Activated T-helper 1 cell treated with anti-CD3 and anti-CD28 coated beads, Interleukin-12 subunit alpha, Interleukin-12 subunit beta, Interleukin-2, Interleukin-4 antibody, amounts not matched to agents 30 ng/mL and 10 ng/mL and 1 ng/mL, durations not matched to agents 14 hours and 24 hours and 36 hours (primary cell): ENCODE measurements at regions of chr10 and their contacts with region 1.

Region 1: GRCh38 chr10:88828310-88828709 is 23.3 kb downstream of the ANKRD22 start:
- DNase-seq: no peak
- H3K4me3 Mint-ChIP-seq: peak overlapping the region; percentile 12
- H3K27ac Mint-ChIP-seq: no peak overlapping the region
- H3K4me1 Mint-ChIP-seq: peaks cover 84% of the 10 kb centered on the region
- H3K27me3 Mint-ChIP-seq: no peaks in the 10 kb centered on the region

Region 2: GRCh38 chr10:88042160-88043100 is 785.9 kb before region 1 on chr10:
- intact Hi-C with region 1: no loop called
- DNase-seq: no peak
- H3K4me3 Mint-ChIP-seq: no peak overlapping the region
- H3K27ac Mint-ChIP-seq: no peak overlapping the region
- H3K4me1 Mint-ChIP-seq: peaks cover 7% of the 10 kb centered on the region
- H3K27me3 Mint-ChIP-seq: peaks cover 8% of the 10 kb centered on the region

Region 3: GRCh38 chr10:88582806-88583583 is 245.3 kb before region 1 on chr10 and contains the start of gene RNLS:
- intact Hi-C with region 1: no loop called
- DNase-seq: peak; percentile 54
- H3K4me3 Mint-ChIP-seq: peak within 1 kb of the TSS; percentile 85
- H3K27ac Mint-ChIP-seq: peak within 1 kb of the TSS; percentile 73
- H3K4me1 Mint-ChIP-seq: peaks cover 14% of the 10 kb centered on the region
- H3K27me3 Mint-ChIP-seq: peaks cover 8% of the 10 kb centered on the region
- total RNA-seq, gene RNLS: 2.0 and 2.5 TPM in 2 replicates

Region 4: DNA sequence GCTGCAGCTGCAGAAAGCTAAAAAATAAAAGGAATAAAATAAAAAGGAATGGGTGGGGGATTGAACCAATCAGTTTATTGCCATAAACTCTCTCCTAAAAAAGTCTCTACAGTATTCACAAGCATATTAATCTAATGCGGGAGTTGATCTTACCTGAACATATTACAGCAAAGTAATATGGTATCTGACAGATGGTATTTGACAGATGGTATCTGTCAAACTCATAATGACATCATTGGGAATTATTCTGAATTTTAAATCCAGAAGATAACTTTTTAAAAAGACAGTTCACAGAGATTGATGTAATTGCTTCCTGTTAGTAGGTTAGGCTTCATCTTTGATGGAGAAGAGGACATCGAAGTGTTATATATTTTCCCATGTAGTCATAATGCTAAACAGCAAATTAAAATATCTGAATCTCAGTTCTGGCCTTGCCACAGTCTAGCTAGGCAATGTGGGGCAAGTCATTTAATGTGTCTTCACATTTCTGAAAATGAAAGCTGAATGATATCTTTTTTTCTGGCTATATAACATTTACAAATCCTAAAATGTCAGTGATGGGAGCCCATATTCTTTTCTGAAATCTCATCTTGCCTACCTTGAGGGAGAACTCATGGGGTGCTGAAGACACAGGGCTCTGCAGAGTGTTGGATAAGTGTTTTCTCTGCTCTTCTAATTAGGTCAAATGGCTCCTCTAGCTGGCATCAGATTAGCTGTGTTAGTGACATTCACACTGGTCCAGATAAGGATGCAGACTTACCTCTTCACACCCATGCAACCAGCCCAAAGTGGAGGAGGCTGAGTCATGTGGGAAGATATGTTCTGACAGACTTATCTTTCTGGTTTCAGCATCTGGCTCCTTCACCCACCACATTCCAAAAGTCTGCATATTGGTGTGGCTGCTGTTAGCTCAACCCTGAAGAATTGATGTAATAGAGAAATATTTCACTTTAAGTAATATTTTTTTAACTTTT is 27.9 kb before region 1 on chr10:
- intact Hi-C with region 1: no loop called
- DNase-seq: no peak
- H3K4me3 Mint-ChIP-seq: peak overlapping the region; percentile 3
- H3K27ac Mint-ChIP-seq: no peak overlapping the region
- H3K4me1 Mint-ChIP-seq: peaks cover 14% of the 10 kb centered on the region
- H3K27me3 Mint-ChIP-seq: peaks cover 45% of the 10 kb centered on the region

Region 5: DNA sequence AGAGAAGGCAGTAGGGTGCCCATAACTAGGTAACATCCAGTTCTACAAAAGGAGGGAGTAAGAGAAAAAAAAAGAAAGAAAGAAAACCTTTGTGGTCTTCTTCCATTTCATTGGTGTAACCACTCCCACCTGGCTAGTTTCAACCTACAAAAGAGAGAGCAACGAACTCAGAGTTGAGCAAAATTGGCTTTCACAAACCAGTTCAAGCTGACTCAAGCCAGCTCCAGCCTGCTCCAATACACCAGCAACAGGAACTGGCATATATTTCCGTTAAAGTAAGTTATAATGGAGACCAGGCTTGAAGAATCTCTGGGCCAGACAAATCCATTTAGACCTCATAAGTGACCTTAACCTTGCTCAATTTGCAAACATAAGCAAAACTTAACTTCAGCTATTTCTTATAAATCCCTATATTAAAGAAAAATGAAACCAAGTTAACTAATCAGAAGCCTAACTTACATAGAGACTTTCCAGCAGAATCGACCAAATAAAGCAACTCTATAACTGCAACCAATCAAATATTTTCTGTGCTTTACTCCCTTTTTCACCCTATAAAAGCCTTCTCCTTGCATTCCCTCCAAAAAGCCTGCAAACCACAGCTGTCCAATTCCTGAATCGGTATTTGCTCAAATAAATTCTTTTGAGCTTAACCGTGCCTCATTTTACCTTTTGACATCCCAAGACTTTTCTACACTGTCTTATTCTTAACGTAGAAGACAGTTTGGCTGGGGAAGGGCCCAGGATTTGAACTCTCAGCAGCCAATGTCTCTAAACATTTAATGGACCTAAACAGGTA is 13.2 kb after region 1 on chr10:
- intact Hi-C with region 1: no loop called
- DNase-seq: no peak
- H3K4me3 Mint-ChIP-seq: no peak overlapping the region
- H3K27ac Mint-ChIP-seq: no peak overlapping the region
- H3K4me1 Mint-ChIP-seq: peaks cover 10% of the 10 kb centered on the region
- H3K27me3 Mint-ChIP-seq: peaks cover 9% of the 10 kb centered on the region

Region 6: DNA sequence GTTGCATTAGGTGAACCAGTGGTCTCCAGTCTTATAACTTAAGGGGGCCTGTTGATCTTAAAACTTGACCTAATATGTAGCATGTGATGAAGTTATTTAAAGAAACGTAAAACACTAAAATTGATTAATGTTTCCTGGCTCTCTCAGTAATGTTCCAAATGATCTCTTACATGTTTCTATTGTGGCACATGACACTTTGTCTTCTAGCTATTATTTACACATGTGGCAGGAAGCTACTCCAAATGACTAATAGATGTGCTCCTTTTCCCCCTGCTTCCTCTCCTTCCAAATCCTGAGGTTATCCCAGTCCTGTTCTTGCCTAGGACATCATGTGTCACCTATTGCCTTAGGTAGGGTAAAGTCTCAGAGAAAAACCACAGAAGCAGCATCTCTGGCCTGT is 251.7 kb after region 1 on chr10:
- intact Hi-C with region 1: loop called (anchors 5 kb)
- DNase-seq: no peak
- H3K4me3 Mint-ChIP-seq: no peak overlapping the region
- H3K27ac Mint-ChIP-seq: no peak overlapping the region
- H3K4me1 Mint-ChIP-seq: peaks cover 10% of the 10 kb centered on the region
- H3K27me3 Mint-ChIP-seq: peaks cover 6% of the 10 kb centered on the region

Region 7: DNA sequence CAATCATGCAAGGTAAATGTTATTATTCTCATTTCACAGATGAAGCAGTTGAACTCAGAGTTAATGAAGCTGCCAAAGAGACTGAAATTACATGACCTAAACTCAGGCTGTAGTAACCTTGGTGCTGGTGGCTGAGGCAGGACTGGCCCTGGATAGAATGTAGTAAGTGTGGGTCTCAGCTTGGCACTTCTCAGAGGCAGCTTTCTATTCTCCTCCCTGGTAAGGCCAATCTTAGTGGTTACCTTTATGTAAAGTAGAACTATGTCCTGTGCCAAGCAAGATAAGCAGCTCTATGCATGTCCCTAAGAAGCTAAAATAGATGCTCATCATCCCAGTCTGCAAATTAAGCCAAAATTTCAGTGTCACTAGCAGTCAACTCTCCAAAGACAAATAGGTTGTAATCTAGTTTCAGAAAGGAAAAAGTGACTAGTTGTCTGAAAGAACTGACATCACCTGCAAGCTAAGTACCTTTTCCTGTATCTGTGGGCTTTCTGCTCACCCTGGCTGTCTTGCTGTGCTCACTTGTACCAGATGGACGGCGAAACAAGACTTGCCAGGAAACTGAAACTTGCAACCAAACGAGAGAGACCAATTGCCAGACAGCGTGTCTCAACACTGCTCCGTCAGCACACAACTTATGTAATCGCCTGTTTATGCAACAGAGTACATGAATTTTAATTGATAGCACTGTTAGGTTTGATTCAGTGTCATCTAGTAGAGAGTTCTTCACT is 335.1 kb after region 1 on chr10:
- intact Hi-C with region 1: loop called (anchors 5 kb)
- DNase-seq: peak; percentile 56
- H3K4me3 Mint-ChIP-seq: peak overlapping the region; percentile 57
- H3K27ac Mint-ChIP-seq: peak overlapping the region; percentile 76
- H3K4me1 Mint-ChIP-seq: peaks cover 35% of the 10 kb centered on the region
- H3K27me3 Mint-ChIP-seq: peaks cover 41% of the 10 kb centered on the region